ENCODE measurements at regions of chr3 and their contacts with region 1.

Region 1: DNA sequence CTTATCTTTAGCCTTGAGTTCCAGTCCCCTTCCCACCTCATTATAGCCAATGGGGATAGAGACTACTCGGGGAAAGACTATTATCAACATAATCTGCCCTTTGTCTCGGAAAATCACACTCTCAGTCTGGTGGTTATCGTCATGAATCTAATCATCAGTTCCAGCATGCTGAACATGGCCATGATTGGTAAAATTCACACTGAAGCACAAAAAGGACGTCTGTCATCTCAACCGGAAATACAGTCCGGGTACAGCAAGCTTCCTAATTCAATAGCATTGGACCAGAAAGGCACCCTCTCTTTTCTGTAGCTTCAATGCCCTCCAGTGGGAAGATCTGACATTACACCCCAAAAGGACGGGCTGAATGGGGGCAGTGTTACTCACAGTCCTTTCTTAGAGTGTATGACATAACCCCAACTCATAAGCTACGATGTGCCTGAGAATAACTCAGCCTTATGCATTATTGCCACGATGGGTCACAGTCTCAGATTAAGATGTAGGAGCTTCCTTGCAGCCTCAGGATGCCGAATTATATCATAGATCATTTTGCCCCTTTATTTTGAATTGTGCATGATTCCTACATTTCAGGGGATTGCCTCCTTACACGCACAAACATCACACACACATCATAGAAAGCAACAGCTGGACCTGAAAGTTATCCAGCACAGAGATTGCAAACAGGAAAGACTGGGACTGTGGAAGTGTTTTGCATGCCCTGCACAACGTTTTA is 390.4 kb upstream of the LMCD1 start:
- DNase-seq: peak in 8 of 10 donors; percentile 31 to 77 (median 66)
- H3K4me3 ChIP-seq: peak overlapping the region in 57 of 59 donors; percentile 4 to 65 (median 42)
- H3K27ac ChIP-seq: peak overlapping the region in 1 of 59 donors; percentile 36
- H3K27me3 ChIP-seq: no peaks in the 10 kb centered on the region
- CTCF ChIP-seq: peak; percentile 74 to 95 (median 90)

Region 2: DNA sequence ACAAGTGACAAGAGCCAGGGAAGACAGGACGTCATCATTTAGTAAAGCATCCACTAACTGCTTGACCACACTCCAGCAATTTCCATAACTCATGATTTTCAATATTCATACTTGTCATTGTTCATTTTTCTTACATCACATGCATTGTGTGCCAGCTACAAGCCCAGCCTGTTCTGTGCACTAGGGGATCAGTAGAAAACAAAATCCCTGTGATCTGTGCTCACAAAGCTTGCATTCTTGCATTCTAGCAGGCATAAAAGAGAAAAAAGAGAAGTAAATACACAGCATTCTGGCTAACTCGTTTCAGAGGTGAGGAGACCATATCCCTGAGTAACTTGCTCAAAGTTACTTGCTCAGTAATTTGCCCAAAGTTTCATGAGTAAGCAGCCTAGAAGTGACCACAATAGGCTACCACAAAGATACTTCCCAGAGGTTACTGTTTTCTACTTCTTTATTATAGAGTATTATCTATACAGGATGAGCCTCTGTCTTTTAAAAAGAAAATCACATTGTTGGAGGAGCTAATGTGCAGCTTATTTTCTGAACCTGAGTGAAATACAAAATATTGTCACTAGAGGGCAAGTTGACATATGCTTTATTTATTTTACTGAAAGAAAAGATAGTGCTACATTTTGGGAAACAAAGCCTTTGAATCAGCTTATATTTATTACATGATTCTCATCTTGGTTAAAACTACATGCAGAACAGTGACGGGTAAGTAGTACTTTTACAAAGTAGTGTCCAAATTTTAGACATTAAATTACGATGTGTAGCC is 311.0 kb before region 1 on chr3:
- intact Hi-C with region 1: loop called in 1 of 2 experiments (anchors 2 kb)
- DNase-seq: no peak
- H3K4me3 ChIP-seq: peak overlapping the region in 7 of 59 donors; percentile 7 to 33 (median 21)
- H3K27ac ChIP-seq: peak overlapping the region in 10 of 59 donors; percentile 3 to 68 (median 22)
- H3K27me3 ChIP-seq: no peaks in the 10 kb centered on the region
- CTCF ChIP-seq: peak in 55 of 56 donors; percentile 27 to 65 (median 50)

Region 3: GRCh38 chr3:7920211-7920610 is 191.0 kb before region 1 on chr3:
- intact Hi-C with region 1: no loop called
- DNase-seq: no peak
- H3K4me3 ChIP-seq: no peak overlapping the region
- H3K27ac ChIP-seq: no peak overlapping the region
- H3K27me3 ChIP-seq: peaks cover 0 to 6% (median 0%) of the 10 kb centered on the region in 45 donors
- CTCF ChIP-seq: no peak

Region 4: GRCh38 chr3:7977245-7978103 is 133.8 kb before region 1 on chr3:
- intact Hi-C with region 1: loop called in 1 of 2 experiments (anchors 10 kb)
- DNase-seq: no peak
- H3K4me3 ChIP-seq: peak overlapping the region in 21 of 59 donors; percentile 2 to 51 (median 17)
- H3K27ac ChIP-seq: peak overlapping the region in 4 of 59 donors; percentile 21 to 66 (median 42)
- H3K27me3 ChIP-seq: no peaks in the 10 kb centered on the region
- CTCF ChIP-seq: no peak

Region 5: DNA sequence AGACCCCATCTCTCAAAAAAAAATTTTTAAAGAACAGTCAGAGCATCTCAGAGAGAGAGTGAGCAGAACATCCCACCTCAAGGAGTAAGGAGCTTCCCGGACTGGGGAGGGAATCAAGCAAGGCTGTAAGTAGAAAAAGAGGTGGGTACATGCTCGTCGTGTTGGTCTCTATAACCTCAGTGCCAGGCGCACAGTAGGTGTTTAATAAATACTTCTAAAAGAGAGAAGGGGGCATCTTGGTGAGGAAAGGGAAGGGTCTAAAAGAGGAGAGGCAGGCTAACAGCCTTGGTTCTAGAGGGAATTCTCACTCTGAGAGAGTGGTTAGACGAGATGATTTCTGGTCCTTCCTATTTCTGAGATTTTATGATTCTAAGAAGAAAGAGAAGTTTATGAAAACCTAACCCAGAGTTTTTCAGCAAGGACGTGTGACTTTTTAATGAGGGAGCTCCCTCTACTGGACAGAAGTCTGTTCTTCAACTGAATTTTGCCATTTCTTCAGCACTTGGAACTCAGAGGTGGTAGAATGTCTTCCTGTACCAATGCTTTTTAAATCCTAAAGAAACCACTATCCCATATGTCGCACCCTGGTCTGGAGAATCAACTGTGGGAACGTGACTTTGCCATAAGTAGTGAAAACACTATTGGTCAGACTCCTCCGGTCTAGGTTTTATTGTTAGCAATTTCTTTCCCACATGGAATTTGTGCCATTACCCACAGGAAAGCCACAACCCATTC is 190.7 kb after region 1 on chr3:
- intact Hi-C with region 1: loop called in 1 of 2 experiments (anchors 10 kb)
- DNase-seq: no peak
- H3K4me3 ChIP-seq: no peak overlapping the region
- H3K27ac ChIP-seq: no peak overlapping the region
- H3K27me3 ChIP-seq: no peaks in the 10 kb centered on the region
- CTCF ChIP-seq: peak; percentile 48 to 84 (median 75)

Region 6: GRCh38 chr3:8416965-8417364 is 305.7 kb after region 1 on chr3:
- intact Hi-C with region 1: loop called in 1 of 2 experiments (anchors 10 kb)
- DNase-seq: no peak
- H3K4me3 ChIP-seq: no peak overlapping the region
- H3K27ac ChIP-seq: no peak overlapping the region
- H3K27me3 ChIP-seq: no peaks in the 10 kb centered on the region
- CTCF ChIP-seq: no peak